ENCODE measurements at regions of chr17 and their contacts with region 1.

Region 1: DNA sequence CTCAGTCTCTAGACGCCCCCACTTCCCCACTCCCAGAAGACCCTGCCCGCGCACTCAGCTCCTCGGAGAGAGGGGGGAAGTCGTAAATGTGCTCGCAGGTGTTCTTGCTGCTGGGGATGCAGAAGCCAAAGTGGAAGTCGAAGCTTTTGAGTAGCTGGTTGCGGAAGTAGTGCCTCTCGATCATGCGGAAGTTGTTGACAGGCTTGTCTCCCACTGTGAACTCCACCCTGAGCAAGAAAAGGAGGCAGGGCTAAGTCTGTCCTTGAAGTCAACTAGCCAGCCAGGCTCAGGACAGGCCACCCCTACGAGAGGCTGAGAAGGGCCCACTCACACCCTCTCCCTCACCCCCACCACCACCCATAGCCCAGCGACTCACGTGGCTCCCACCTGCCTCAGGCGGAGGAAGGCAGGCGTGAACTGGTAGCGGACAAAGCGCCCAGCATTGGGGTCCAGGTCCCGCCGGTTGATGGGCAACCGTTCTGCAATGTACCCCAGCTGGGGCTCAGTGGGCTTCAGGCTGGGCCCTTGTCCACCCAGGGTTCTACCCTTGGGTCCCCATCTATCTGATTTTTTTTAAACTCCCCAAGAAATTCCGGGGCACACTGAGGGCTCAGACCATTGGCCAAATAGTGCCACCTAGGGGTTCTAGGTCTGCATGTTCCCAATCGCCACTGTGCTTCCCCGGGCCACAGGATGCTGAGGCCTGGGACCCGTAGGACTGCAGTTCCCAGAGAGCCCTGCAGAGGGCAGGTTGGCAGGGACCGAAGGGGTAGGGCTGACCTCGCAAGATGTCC is 4.6 kb downstream of the UNC119 start:
- DNase-seq: peak; percentile 50
- H3K4me3 ChIP-seq: no peak overlapping the region
- H3K27ac ChIP-seq: no peak overlapping the region
- H3K4me1 ChIP-seq: peaks cover 6% of the 10 kb centered on the region
- H3K27me3 ChIP-seq: no peaks in the 10 kb centered on the region
- CTCF ChIP-seq: peak; percentile 84 to 99

Region 2: DNA sequence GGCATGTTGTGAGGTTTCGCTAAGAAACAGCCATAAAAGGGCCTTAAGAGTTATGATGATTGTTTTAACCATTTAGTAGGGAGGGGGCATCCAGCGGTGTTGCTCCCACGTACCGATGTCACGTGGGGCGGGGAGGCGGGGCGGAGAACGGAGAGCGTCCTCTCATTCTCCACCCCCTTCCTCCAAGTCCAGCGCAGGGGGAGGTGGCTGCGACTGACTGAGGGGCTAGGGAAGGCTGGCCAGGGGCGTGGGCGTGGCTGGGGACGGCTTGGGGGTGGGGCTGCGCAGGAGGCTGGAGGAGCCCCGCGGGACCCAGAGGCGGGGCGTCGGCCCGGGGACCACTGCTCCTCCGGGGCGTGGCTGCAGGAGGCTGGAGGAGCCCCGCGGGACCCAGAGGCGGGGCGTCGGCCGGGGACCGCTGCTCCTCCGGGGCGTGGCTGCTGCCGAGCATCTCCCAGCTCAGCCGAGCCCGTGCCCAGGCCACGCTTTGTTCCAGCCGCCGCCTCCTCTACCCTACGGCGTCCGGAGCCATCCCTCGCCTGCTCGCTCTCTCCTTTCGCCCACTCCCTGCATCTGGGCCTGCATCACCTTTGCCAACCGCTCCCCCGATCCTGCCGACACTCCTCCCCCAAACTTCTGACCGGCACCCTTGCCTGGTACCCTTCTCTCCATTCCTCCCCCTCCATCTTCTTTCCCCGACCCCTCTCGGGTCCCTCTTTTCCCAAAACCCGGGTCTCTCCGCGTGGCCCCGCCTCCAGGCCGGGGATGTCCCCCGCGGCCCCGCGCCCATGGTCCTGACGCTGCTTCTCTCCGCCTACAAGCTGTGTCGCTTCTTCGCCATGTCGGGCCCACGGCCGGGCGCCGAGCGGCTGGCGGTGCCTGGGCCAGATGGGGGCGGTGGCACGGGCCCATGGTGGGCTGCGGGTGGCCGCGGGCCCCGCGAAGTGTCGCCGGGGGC is 176.3 kb before region 1 on chr17 and contains the start of gene SARM1:
- CTCF ChIA-PET with region 1: no interaction called
- dilution Hi-C with region 1: loop called (anchors 5 kb)
- in situ Hi-C with region 1: no loop called
- intact Hi-C with region 1: no loop called
- DNase-seq: peak; percentile 27
- H3K4me3 ChIP-seq: peak within 1 kb of the TSS; percentile 23 to 50 (median 36)
- H3K27ac ChIP-seq: no peak within 1 kb of the TSS
- H3K4me1 ChIP-seq: peaks cover 11% of the 10 kb centered on the region
- H3K27me3 ChIP-seq: no peaks in the 10 kb centered on the region
- CTCF ChIP-seq: no peak
- total RNA-seq, gene SARM1: 4.8 to 8.7 TPM

Region 3: DNA sequence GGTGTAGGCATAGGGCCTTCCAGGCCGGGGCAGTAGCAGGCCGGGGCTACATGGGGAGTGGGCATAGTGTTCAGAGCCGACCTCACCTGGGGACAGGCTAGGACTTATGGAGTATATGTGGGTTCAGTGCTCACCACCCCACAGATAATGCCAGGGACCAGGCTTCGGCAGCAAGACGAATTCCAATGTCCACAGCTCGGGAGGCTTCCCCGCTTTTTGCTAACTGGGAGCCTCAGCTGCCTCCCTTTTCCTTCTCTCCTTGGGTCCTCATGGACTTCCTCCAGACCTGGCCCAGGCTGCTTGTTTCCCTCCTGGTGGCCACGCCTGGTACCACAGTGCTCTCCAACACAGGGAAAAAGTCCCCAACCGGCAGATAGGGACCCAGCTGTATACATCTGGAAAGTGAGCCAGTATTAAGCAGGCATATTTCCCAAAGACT is 121.7 kb before region 1 on chr17:
- CTCF ChIA-PET with region 1: no interaction called
- dilution Hi-C with region 1: no loop called
- in situ Hi-C with region 1: no loop called
- intact Hi-C with region 1: no loop called
- DNase-seq: no peak
- H3K4me3 ChIP-seq: no peak overlapping the region
- H3K27ac ChIP-seq: no peak overlapping the region
- H3K4me1 ChIP-seq: no peaks in the 10 kb centered on the region
- H3K27me3 ChIP-seq: no peaks in the 10 kb centered on the region
- CTCF ChIP-seq: peak; percentile 39 to 45

Region 4: GRCh38 chr17:28449861-28450260 is 98.0 kb before region 1 on chr17:
- CTCF ChIA-PET with region 1: no interaction called
- dilution Hi-C with region 1: loop called (anchors 5 kb)
- in situ Hi-C with region 1: no loop called
- intact Hi-C with region 1: no loop called
- DNase-seq: no peak
- H3K4me3 ChIP-seq: no peak overlapping the region
- H3K27ac ChIP-seq: no peak overlapping the region
- H3K4me1 ChIP-seq: peaks cover 11% of the 10 kb centered on the region
- H3K27me3 ChIP-seq: no peaks in the 10 kb centered on the region
- CTCF ChIP-seq: no peak

Region 5: GRCh38 chr17:28509789-28510188 is 38.0 kb before region 1 on chr17:
- CTCF ChIA-PET with region 1: no interaction called
- dilution Hi-C with region 1: loop called (anchors 5 kb)
- in situ Hi-C with region 1: no loop called
- intact Hi-C with region 1: no loop called
- DNase-seq: no peak
- H3K4me3 ChIP-seq: no peak overlapping the region
- H3K27ac ChIP-seq: no peak overlapping the region
- H3K4me1 ChIP-seq: peaks cover 18% of the 10 kb centered on the region
- H3K27me3 ChIP-seq: no peaks in the 10 kb centered on the region
- CTCF ChIP-seq: no peak

Region 6: DNA sequence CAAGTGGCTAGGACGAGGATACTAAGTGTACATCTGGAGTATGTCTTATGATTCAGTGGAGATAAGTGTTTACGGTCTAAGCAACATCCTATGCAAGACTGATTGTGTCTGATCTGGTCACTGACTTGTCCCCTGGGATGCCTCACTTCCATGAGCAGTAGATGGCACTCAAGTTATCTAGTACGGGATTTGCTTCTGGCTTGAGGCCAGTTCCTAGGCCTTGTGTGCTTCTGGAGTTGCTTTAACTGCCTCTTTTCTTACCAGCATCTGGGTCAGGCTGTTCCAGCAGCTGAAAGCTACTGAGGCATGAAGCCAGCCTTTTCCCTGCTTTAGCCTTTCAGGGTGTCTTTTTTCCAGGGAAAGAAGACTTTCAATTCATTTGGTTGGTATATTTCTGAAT is 137.1 kb after region 1 on chr17:
- CTCF ChIA-PET with region 1: no interaction called
- dilution Hi-C with region 1: no loop called
- in situ Hi-C with region 1: no loop called
- intact Hi-C with region 1: no loop called
- DNase-seq: no peak
- H3K4me3 ChIP-seq: no peak overlapping the region
- H3K27ac ChIP-seq: no peak overlapping the region
- H3K4me1 ChIP-seq: no peaks in the 10 kb centered on the region
- H3K27me3 ChIP-seq: no peaks in the 10 kb centered on the region
- CTCF ChIP-seq: no peak